ENCODE measurements at regions of chr6 and their contacts with region 1.

Region 1: DNA sequence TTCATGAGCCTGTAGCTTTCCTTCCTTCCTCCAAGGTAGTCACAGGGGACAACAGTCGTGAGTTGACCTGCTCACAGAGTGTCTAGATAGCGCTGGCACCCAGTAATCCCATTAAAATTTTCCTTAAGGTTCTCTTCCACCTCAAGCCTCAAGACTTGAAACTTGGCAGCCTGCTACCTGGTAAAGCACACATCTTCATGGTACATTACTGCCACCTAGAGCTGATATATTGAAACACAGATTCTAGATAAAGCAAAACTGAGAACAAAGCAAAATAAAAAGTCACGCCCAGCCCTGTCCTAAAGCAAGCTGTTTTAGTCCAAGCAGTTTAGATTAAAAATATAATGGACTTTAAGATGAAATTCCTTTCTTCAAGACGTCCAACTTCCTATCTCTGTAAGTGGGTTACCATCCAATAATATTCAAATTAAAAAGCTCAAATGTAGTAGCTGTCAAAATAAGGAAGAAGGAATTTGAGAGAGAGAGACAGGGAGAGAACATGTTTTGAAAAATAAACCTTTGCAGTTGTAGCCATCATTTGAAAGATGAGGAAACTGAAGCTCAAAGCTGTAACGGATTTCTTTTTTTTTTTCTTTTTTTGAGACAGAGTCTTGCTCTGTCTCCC is 50.7 kb upstream of the CD83 start:
- DNase-seq: peak; percentile 16
- H3K4me3 ChIP-seq: no peak overlapping the region
- H3K27me3 ChIP-seq: peaks cover 3% of the 10 kb centered on the region; the same call in 1 of the 2 replicates
- CTCF ChIP-seq: peak; percentile 59

Region 2: DNA sequence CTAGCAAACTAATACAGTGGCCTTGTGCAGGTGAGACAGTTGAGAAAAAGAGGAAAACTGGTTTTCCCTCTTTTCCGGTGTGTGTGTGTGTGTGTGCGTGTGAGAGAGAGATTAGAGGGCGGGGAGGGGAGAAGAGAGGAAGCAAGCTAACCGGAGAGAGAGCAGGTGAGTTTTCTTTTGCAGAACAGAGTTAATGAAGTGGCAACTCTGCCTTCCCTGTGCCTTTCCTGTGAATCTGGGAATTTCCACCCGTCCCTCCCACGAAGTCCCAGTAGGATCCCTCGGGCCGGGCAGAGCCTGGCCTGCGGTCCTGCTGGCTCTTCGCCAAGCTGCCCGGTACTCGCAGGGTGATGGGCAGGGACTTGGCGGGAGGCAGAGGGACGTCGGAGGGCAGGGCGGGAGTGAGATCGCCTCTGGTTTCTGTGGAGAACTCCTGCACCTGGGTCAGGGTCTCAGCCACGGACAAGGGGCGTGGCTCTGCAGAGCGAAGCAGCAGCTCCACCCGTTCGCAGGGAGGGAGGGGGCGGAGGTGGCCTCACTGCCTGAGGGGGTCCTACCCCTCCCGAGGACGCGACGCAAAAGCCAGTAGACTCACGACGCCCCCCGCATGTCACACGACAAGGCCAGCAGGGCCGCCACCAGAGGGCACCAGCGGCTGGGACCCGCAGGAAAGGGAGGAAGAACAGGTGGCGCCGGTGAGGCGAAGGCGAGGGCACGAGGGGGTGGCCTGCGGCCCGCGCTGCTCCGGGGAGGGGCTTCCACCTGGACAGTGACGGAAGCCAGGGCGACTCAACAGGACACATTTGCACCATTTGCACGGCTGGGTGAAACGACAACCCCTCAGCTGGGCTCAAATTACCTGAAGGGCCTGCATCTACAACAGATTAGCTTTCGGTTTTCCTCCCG is 193.4 kb before region 1 on chr6:
- CTCF ChIA-PET with region 1: interaction called, 12 read pairs
- POLR2A ChIA-PET with region 1: no interaction called
- DNase-seq: no peak
- H3K4me3 ChIP-seq: peak overlapping the region; percentile 37
- H3K27me3 ChIP-seq: peaks cover 2% of the 10 kb centered on the region; the same call in 1 of the 2 replicates
- CTCF ChIP-seq: peak; percentile 83

Region 3: DNA sequence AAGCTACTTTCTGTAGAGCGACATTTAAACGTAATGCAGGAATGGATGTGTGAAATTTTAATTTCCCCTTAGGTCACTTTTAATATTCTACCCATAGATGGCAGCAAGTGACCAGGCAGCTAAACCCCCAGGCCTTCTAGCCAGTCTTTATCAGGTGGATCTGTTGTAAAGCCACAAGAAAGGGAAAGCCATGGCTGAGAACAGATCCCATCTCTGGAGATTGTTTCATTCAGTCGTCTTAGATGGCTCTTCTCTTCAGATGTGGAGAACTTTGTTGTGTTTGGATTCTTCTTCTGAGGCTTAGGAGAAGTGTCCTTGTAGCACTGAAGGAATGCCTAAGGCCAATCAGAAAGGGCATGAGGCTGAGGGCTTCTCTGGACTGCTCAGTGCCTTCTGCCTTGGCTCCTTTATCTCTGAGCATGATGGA is 157.9 kb before region 1 on chr6:
- CTCF ChIA-PET with region 1: interaction called, 87 read pairs
- POLR2A ChIA-PET with region 1: no interaction called
- DNase-seq: no peak
- H3K4me3 ChIP-seq: no peak overlapping the region
- H3K27me3 ChIP-seq: peaks cover 1% of the 10 kb centered on the region; the same call in 1 of the 2 replicates
- CTCF ChIP-seq: peak; percentile 74

Region 4: GRCh38 chr6:13920552-13920951 is 146.3 kb before region 1 on chr6:
- CTCF ChIA-PET with region 1: interaction called, 13 read pairs
- POLR2A ChIA-PET with region 1: no interaction called
- DNase-seq: no peak
- H3K4me3 ChIP-seq: no peak overlapping the region
- H3K27me3 ChIP-seq: peaks cover 3% of the 10 kb centered on the region
- CTCF ChIP-seq: no peak

Region 5: GRCh38 chr6:14055541-14055940 is 11.4 kb before region 1 on chr6:
- CTCF ChIA-PET with region 1: interaction called, 14 read pairs
- POLR2A ChIA-PET with region 1: no interaction called
- DNase-seq: no peak
- H3K4me3 ChIP-seq: no peak overlapping the region
- H3K27me3 ChIP-seq: peaks cover 3% of the 10 kb centered on the region
- CTCF ChIP-seq: no peak

Region 6: GRCh38 chr6:14200047-14200446 is 133.2 kb after region 1 on chr6:
- CTCF ChIA-PET with region 1: no interaction called
- POLR2A ChIA-PET with region 1: no interaction called
- DNase-seq: no peak
- H3K4me3 ChIP-seq: no peak overlapping the region
- H3K27me3 ChIP-seq: no peaks in the 10 kb centered on the region
- CTCF ChIP-seq: no peak

Region 7: DNA sequence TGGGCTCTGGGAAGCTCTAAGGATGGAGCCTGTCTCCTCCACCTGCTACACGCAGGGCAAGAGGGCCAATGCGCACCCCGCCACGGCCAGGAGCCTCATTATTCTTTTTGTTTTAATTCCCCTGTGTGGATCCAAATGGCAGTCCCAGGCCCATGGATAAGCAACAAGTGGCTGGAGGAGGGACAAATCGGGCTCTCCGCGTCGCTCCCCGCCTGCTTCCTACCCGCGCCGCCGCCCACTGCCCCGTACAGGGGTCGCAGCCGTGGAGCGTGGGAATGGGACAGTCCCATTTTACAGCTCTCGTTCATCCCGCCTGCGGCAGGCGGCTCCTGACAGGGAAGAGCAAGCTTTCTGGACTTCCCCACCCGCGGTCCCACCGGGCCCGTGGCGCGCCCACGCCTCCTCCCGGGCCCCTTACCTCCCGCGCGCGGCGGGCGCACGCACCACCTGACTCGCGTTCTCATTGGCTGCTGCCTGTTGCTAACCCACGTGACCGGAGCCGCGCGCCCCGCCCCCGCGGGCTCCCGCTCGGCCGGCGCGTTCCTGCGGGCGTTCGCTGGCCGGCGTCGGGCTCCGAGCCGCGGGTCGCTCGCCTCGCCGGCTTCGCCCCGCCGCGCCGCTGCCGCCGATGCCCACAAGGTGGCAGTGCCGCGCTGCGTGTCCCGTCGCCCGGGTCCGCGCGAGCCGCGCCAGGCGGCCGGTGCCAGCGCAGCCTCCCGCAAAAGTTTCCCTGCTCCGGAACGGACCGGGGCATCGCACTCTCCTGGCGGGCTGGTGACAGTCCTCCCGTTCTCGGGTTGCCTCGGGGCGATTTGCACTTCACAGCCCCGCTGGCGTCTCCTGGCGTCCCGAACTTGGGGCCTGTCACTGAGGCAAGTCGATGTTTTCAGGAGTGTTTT is 144.0 kb after region 1 on chr6:
- CTCF ChIA-PET with region 1: no interaction called
- POLR2A ChIA-PET with region 1: no interaction called
- DNase-seq: peak; percentile 26
- H3K4me3 ChIP-seq: peak overlapping the region; percentile 64
- H3K27me3 ChIP-seq: no peaks in the 10 kb centered on the region
- CTCF ChIP-seq: 0 out of 2 replicates have a peak, but pooled peaks have one; percentile 20

Measured in BJ (cell line).